MCF 10A (cell line): ENCODE measurements at regions of chr15 and their contacts with region 1.

Region 1: DNA sequence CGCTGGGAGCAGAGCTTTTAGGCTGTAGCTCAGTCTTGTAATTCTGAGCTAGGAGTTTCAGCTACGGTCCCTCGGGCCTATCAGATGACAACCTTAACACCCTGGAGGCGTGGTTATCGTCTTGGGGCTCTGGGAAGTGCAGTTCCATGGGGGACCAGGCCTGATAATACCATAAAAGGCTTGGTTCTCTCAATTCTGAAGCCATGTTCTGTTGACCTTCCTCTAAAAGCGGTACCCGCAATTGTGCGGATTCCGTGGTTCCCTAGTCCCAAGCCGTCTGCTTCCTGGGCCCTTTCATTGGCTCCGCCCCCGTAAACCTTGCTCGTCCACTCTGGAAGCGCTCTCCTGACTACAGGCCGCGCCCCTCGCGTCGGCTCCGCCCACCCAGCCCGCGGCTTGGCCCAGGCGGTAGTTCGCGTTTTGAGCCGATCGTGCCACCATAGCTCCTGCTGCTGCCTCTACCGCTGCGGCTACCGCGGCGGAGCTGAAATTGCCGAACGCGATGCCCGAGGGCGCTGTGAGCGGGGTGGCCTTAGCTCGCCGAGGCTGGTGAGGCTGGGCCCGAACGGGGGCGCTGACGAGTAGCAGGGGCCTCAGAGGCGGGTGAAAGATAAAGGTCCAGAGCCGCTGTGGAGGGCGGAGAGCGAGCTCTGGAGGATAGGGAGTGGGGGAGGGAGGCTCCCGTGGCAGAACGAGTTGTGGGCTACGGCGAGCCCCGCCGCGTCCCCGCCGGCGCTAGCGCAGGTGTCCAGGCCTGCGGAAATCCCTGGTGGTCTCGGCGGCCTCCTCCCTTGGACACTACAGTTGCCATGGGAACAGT is at the start of gene MAPKBP1:
- DNase-seq: peak; percentile 98
- H3K4me3 Mint-ChIP-seq: peak within 1 kb of the TSS; percentile 92
- H3K27ac Mint-ChIP-seq: peak within 1 kb of the TSS; percentile 85
- H3K4me1 Mint-ChIP-seq: peaks cover 35% of the 10 kb centered on the region
- H3K27me3 Mint-ChIP-seq: no peaks in the 10 kb centered on the region
- CTCF ChIP-seq: peak; percentile 58
- total RNA-seq, gene MAPKBP1: 33.2 and 35.0 TPM in 2 replicates

Region 2: DNA sequence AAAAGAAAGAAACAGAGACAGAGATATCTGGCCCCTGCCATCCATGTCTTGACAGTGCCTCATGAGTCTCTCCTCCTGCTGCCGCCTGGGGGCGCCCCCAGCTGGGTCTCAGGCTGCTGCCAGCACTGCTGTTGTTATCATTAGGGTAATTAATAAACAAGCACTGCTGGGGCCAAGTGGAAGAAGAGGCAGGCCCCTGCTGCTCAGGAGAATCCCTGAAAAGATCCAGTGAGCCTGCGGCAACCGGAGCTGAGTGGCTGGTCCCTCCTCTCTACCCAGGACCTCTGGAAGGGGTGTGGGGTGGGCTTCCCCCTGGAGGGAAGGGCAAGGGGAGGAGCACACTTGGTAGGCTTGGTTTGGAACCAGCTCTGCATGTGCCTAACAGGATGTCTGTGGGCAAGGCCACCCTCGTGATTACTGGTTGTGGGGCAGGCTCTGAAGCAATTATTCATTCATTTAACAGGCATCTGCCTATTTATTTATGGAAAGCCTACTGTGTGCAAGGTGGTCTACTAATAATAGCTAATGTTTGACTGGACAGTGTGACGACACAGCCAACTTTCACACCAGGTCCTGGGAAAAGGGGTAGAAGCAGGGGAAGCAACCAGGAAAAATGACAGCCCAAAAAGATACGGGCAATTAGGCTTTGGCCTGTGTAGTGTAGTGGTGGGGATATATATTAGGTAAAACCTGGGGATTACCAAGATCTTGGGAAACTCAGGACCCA is 216.4 kb before region 1 on chr15:
- CTCF ChIA-PET with region 1: interaction called, 4 read pairs
- POLR2A ChIA-PET with region 1: no interaction called
- intact Hi-C with region 1: loop called (anchors 5 kb)
- DNase-seq: peak; percentile 55
- H3K4me3 Mint-ChIP-seq: peak overlapping the region; percentile 75
- H3K27ac Mint-ChIP-seq: no peak overlapping the region
- H3K4me1 Mint-ChIP-seq: no peaks in the 10 kb centered on the region
- H3K27me3 Mint-ChIP-seq: no peaks in the 10 kb centered on the region
- CTCF ChIP-seq: peak; percentile 69

Region 3: DNA sequence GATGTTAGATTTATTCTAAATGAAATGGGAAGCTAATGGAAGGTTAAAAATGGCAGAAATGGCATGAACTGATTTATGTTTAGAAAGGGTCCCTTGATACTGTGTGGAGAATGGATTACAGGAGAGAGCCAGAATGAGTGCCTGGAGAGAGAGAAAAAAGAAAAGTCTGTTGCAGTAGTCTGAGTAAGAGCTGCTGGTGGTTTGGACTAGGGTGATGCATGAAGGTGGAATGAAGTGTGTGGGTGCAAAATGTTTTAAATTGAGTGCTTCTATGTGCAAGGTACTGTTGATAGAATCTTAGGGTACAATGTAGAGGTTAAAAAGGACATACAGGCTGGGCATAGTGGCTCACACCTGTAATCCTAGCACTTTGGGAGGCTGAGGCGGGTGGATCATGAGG is 125.5 kb before region 1 on chr15:
- CTCF ChIA-PET with region 1: no interaction called
- POLR2A ChIA-PET with region 1: no interaction called
- intact Hi-C with region 1: no loop called
- DNase-seq: no peak
- H3K4me3 Mint-ChIP-seq: no peak overlapping the region
- H3K27ac Mint-ChIP-seq: no peak overlapping the region
- H3K4me1 Mint-ChIP-seq: no peaks in the 10 kb centered on the region
- H3K27me3 Mint-ChIP-seq: no peaks in the 10 kb centered on the region
- CTCF ChIP-seq: no peak

Region 4: GRCh38 chr15:41790756-41791546 is 16.7 kb after region 1 on chr15:
- CTCF ChIA-PET with region 1: interaction called, 17 read pairs
- POLR2A ChIA-PET with region 1: interaction called, 193 read pairs
- intact Hi-C with region 1: no loop called
- DNase-seq: peak; percentile 58
- H3K4me3 Mint-ChIP-seq: peak overlapping the region; percentile 24
- H3K27ac Mint-ChIP-seq: peak overlapping the region; percentile 86
- H3K4me1 Mint-ChIP-seq: peaks cover 51% of the 10 kb centered on the region
- H3K27me3 Mint-ChIP-seq: no peaks in the 10 kb centered on the region
- CTCF ChIP-seq: no peak

Region 5: GRCh38 chr15:41806291-41807181 is 32.3 kb after region 1 on chr15:
- CTCF ChIA-PET with region 1: interaction called, 249 read pairs
- POLR2A ChIA-PET with region 1: interaction called, 486 read pairs
- intact Hi-C with region 1: loop called (anchors 1 kb)
- DNase-seq: peak; percentile 94
- H3K4me3 Mint-ChIP-seq: no peak overlapping the region
- H3K27ac Mint-ChIP-seq: peak overlapping the region; percentile 99
- H3K4me1 Mint-ChIP-seq: peaks cover 30% of the 10 kb centered on the region
- H3K27me3 Mint-ChIP-seq: no peaks in the 10 kb centered on the region
- CTCF ChIP-seq: peak; percentile 20

Region 6: GRCh38 chr15:41820791-41821423 is 46.6 kb after region 1 on chr15:
- CTCF ChIA-PET with region 1: interaction called, 17 read pairs
- POLR2A ChIA-PET with region 1: interaction called, 19 read pairs
- intact Hi-C with region 1: no loop called
- DNase-seq: no peak
- H3K4me3 Mint-ChIP-seq: no peak overlapping the region
- H3K27ac Mint-ChIP-seq: peak overlapping the region; percentile 73
- H3K4me1 Mint-ChIP-seq: no peaks in the 10 kb centered on the region
- H3K27me3 Mint-ChIP-seq: no peaks in the 10 kb centered on the region
- CTCF ChIP-seq: no peak

Region 7: GRCh38 chr15:41904541-41905005 is 130.3 kb after region 1 on chr15:
- CTCF ChIA-PET with region 1: interaction called, 51 read pairs
- POLR2A ChIA-PET with region 1: interaction called, 3 read pairs
- intact Hi-C with region 1: loop called (anchors 1 kb)
- DNase-seq: peak; percentile 66
- H3K4me3 Mint-ChIP-seq: no peak overlapping the region
- H3K27ac Mint-ChIP-seq: peak overlapping the region; percentile 23
- H3K4me1 Mint-ChIP-seq: no peaks in the 10 kb centered on the region
- H3K27me3 Mint-ChIP-seq: no peaks in the 10 kb centered on the region
- CTCF ChIP-seq: peak; percentile 79